Ascending aorta (tissue), 2 donors: ENCODE measurements at regions of chr20 and their contacts with region 1.

Region 1: GRCh38 chr20:63009045-63009961 is 2.5 kb upstream of the BHLHE23 start:
- DNase-seq: peak in 1 of 2 donors; percentile 77
- H3K4me3 ChIP-seq: no peak overlapping the region
- H3K27ac ChIP-seq: no peak overlapping the region
- H3K4me1 ChIP-seq: peaks cover 0 to 6% of the 10 kb centered on the region in 2 donors
- H3K27me3 ChIP-seq: peaks cover 45% of the 10 kb centered on the region
- CTCF ChIP-seq: peak; percentile 82 to 98 (median 96)

Region 2: DNA sequence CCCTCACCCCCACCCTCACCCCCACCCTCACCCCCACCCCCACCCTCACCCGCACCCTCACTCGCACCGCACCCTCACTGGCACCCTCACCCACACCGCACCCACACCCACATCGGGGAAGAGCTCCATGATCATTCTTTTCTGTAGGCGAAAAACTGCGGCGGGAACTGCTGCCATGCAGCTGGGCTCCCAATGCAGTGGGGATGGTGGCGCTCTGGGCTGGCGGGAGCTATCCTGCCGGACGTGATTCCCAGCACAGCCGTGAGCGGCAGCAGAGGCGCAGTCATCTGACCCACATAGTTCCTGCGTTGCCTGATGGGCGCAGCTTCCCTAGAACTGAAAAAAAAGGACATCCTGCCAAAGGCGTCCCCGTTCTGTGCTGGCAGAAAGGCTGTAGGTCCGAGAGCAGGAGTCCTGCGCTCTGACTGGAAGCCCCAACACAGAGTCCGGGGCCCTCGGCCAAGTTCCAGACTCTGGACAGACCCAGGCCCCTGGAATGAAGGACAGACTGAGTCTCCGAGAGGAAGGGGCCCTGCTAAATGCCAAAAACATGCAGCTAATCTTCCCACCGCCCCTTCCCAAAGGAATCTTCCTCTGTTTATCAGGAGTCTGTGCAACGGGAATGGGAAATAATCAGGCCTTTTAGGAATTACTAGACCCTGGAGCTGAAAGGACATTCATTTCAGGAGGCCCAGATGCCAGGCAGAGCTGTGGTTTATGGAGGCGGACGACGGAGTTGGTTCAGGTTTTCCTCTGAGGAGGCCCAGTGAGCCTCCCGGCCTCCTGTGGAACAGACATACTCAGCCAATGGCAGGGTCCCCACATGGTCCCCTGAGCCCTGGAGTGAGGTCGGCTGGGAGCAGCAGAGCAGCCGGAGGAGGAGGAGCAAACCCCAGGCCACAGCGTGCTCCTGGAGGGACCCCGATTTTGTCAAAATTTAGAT is 133.6 kb before region 1 on chr20:
- intact Hi-C with region 1: loop called (anchors 1 kb)
- DNase-seq: peak; percentile 37 to 91
- H3K4me3 ChIP-seq: peak overlapping the region in 1 of 2 donors; percentile 29
- H3K27ac ChIP-seq: peak overlapping the region; percentile 79 to 87
- H3K4me1 ChIP-seq: peaks cover 9 to 14% of the 10 kb centered on the region in 2 donors
- H3K27me3 ChIP-seq: no peaks in the 10 kb centered on the region
- CTCF ChIP-seq: peak; percentile 26 to 63 (median 58)

Region 3: GRCh38 chr20:62900052-62900691 is 109.1 kb before region 1 on chr20:
- intact Hi-C with region 1: loop called (anchors 1 kb)
- DNase-seq: peak; percentile 23 to 85
- H3K4me3 ChIP-seq: no peak overlapping the region
- H3K27ac ChIP-seq: no peak overlapping the region
- H3K4me1 ChIP-seq: peaks cover 8 to 26% of the 10 kb centered on the region in 2 donors
- H3K27me3 ChIP-seq: no peaks in the 10 kb centered on the region
- CTCF ChIP-seq: peak; percentile 88 to 95 (median 93)

Region 4: GRCh38 chr20:62972270-62973032 is 36.9 kb before region 1 on chr20:
- intact Hi-C with region 1: loop called (anchors 1 kb)
- DNase-seq: peak; percentile 33 to 90
- H3K4me3 ChIP-seq: peak overlapping the region; percentile 18 to 49
- H3K27ac ChIP-seq: no peak overlapping the region
- H3K4me1 ChIP-seq: peaks cover 0 to 2% of the 10 kb centered on the region in 2 donors
- H3K27me3 ChIP-seq: no peaks in the 10 kb centered on the region
- CTCF ChIP-seq: peak; percentile 86 to 90 (median 90)